Panc1 (cell line): ENCODE measurements at regions of chr1 and their contacts with region 1.

Region 1: GRCh38 chr1:155063550-155064110 is at the start of gene EFNA4:
- DNase-seq: no peak
- ATAC-seq: peak; percentile 83
- H3K4me3 ChIP-seq: peak within 1 kb of the TSS; percentile 83 to 85
- H3K27ac ChIP-seq: peak within 1 kb of the TSS; percentile 69
- H3K4me1 ChIP-seq: peaks cover 19% of the 10 kb centered on the region
- H3K27me3 ChIP-seq: no peaks in the 10 kb centered on the region
- CTCF ChIP-seq: no peak
- total RNA-seq, gene EFNA4: 8.0 TPM

Region 2: DNA sequence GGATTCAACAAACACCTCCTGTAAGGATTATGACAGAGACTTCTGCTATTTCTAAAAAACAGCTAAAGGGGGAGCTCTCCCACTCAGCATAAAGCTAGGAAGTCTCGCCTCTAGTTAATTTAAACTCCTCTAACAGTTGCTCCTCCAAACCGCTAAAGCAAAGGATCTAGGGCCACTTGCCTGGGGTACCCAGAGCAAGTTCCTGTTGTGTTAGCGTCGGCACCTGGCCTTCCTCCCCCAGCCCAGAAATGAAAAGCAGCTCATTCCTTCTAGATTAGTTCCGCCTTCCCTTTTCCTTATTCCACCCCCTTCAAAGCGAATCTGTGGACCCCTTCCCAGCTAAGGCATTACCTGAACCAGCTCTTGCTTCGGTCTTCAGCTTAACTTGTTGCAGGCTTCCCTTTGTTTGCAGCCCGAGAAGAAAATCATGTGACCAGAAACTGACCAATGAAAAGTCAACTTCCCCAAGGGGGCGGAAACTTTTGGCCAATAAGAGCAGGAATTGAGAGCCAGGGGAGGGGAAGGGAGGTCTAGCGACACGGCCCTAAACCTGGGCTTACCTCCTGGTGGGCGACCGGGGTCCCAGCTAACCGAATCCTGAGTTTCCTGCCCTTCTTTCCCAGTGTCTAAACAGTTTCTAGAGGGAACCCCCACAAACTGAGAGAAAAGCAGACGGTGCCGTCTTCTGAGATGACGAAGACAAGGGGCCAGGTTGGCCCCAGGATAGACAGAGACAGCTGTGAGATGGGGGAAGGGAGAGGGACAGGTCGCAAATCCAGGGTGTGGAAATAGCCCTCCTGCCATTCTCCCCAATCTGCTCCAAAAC is 107.7 kb before region 1 on chr1 and contains the start of gene PBXIP1:
- CTCF ChIA-PET with region 1: no interaction called
- POLR2A ChIA-PET with region 1: no interaction called
- in situ Hi-C with region 1: no loop called
- intact Hi-C with region 1: loop called (anchors 2 kb)
- DNase-seq: no peak
- ATAC-seq: peak; percentile 90
- H3K4me3 ChIP-seq: peak within 1 kb of the TSS; percentile 78 to 93
- H3K27ac ChIP-seq: peak within 1 kb of the TSS; percentile 83
- H3K4me1 ChIP-seq: peaks cover 32% of the 10 kb centered on the region
- H3K27me3 ChIP-seq: no peaks in the 10 kb centered on the region
- CTCF ChIP-seq: no peak
- total RNA-seq, gene PBXIP1: 40.7 TPM

Region 3: DNA sequence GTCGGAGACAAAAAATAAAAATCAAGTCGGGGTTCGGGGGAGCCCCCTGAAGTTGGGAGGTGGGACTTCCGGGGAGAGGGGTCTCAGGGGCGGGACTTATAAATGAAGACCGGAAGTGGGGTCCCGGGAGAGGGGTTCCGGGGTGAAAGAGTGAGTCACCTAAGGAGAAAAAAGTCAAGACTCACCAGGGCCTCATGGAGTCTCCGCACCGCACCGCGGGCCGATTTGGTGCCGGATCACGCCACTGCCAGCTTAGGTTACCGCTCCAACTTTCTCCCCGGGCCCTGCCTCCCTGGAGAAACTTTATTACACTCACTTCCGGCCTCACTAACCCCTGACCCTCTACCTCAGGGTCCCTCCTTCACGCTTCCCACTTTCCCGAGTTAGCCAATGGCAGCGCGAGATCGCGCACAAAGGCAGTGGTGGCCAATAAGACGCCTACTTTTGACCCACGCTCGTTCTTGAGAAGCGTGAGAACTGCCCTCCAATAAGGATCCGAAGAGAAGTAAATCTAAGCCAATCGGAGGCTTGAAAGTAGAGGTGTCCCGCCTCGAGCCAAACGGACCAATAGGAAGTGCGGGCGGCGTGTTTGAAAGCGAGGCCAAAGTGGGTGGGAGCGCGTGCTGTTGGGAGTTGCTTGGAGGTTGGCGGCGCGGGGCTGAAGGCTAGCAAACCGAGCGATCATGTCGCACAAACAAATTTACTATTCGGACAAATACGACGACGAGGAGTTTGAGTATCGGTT is 89.4 kb before region 1 on chr1 and contains the start of gene CKS1B:
- CTCF ChIA-PET with region 1: interaction called, 11 read pairs
- POLR2A ChIA-PET with region 1: no interaction called
- in situ Hi-C with region 1: no loop called
- intact Hi-C with region 1: no loop called
- DNase-seq: peak; percentile 99
- ATAC-seq: peak; percentile 81
- H3K4me3 ChIP-seq: peak within 1 kb of the TSS; percentile 77 to 88
- H3K27ac ChIP-seq: peak within 1 kb of the TSS; percentile 98
- H3K4me1 ChIP-seq: peaks cover 44% of the 10 kb centered on the region
- H3K27me3 ChIP-seq: no peaks in the 10 kb centered on the region
- CTCF ChIP-seq: no peak
- total RNA-seq, gene CKS1B: 212 TPM

Region 4: GRCh38 chr1:155044812-155045690 is 18.6 kb before region 1 on chr1:
- CTCF ChIA-PET with region 1: interaction called, 9 read pairs
- POLR2A ChIA-PET with region 1: interaction called, 21 read pairs
- in situ Hi-C with region 1: no loop called
- intact Hi-C with region 1: no loop called
- DNase-seq: peak; percentile 45
- ATAC-seq: peak; percentile 94
- H3K4me3 ChIP-seq: no peak overlapping the region
- H3K27ac ChIP-seq: no peak overlapping the region
- H3K4me1 ChIP-seq: peaks cover 5% of the 10 kb centered on the region
- H3K27me3 ChIP-seq: no peaks in the 10 kb centered on the region
- CTCF ChIP-seq: peak; percentile 89

Region 5: GRCh38 chr1:155084722-155085503 is 21.3 kb after region 1 on chr1:
- CTCF ChIA-PET with region 1: interaction called, 21 read pairs
- POLR2A ChIA-PET with region 1: no interaction called
- in situ Hi-C with region 1: no loop called
- intact Hi-C with region 1: loop called (anchors 1 kb)
- DNase-seq: peak; percentile 87
- ATAC-seq: peak; percentile 88
- H3K4me3 ChIP-seq: peak overlapping the region; percentile 66 to 75
- H3K27ac ChIP-seq: peak overlapping the region; percentile 71; the same call in 1 of the 2 replicates
- H3K4me1 ChIP-seq: peaks cover 18% of the 10 kb centered on the region
- H3K27me3 ChIP-seq: peaks cover 6% of the 10 kb centered on the region
- CTCF ChIP-seq: peak; percentile 92